ENCODE measurements at regions of chr13 and their contacts with region 1.

Region 1: GRCh38 chr13:27665333-27665732 is 43.6 kb downstream of the POLR1D start:
- DNase-seq: no peak
- ATAC-seq: no peak
- H3K4me3 ChIP-seq: no peak overlapping the region
- H3K27ac ChIP-seq: no peak overlapping the region
- H3K4me1 ChIP-seq: peaks cover 10% of the 10 kb centered on the region
- H3K27me3 ChIP-seq: no peaks in the 10 kb centered on the region
- CTCF ChIP-seq: peak; percentile 24

Region 2: GRCh38 chr13:27783111-27783510 is 117.8 kb after region 1 on chr13:
- intact Hi-C with region 1: loop called in 1 of 2 experiments (anchors 5 kb)
- DNase-seq: no peak
- ATAC-seq: no peak
- H3K4me3 ChIP-seq: no peak overlapping the region
- H3K27ac ChIP-seq: no peak overlapping the region
- H3K4me1 ChIP-seq: no peaks in the 10 kb centered on the region
- H3K27me3 ChIP-seq: peaks cover 0 to 39% (median 9%) of the 10 kb centered on the region in 3 donors
- CTCF ChIP-seq: peak; percentile 4

Measured in psoas muscle (tissue), 8 donors.